Activated CD4-positive, alpha-beta memory T cell treated with anti-CD3 and anti-CD28 coated beads for 36 hours (primary cell): ENCODE measurements at regions of chr5 and their contacts with region 1.

Region 1: GRCh38 chr5:50595199-50595598 is 71.2 kb upstream of the PARP8 start:
- DNase-seq: no peak
- H3K4me3 Mint-ChIP-seq: no peak overlapping the region
- H3K27ac Mint-ChIP-seq: peak overlapping the region; percentile 80
- H3K4me1 Mint-ChIP-seq: peaks cover 42% of the 10 kb centered on the region
- H3K27me3 Mint-ChIP-seq: no peaks in the 10 kb centered on the region

Region 2: GRCh38 chr5:50435168-50435567 is 160.0 kb before region 1 on chr5:
- CTCF ChIA-PET with region 1: no interaction called
- POLR2A ChIA-PET with region 1: no interaction called
- intact Hi-C with region 1: loop called (anchors 2 kb)
- DNase-seq: peak; percentile 28
- H3K4me3 Mint-ChIP-seq: peak overlapping the region; percentile 59
- H3K27ac Mint-ChIP-seq: peak overlapping the region; percentile 86
- H3K4me1 Mint-ChIP-seq: peaks cover 83% of the 10 kb centered on the region
- H3K27me3 Mint-ChIP-seq: no peaks in the 10 kb centered on the region